ENCODE measurements at regions of chr18 and their contacts with region 1.

Region 1: DNA sequence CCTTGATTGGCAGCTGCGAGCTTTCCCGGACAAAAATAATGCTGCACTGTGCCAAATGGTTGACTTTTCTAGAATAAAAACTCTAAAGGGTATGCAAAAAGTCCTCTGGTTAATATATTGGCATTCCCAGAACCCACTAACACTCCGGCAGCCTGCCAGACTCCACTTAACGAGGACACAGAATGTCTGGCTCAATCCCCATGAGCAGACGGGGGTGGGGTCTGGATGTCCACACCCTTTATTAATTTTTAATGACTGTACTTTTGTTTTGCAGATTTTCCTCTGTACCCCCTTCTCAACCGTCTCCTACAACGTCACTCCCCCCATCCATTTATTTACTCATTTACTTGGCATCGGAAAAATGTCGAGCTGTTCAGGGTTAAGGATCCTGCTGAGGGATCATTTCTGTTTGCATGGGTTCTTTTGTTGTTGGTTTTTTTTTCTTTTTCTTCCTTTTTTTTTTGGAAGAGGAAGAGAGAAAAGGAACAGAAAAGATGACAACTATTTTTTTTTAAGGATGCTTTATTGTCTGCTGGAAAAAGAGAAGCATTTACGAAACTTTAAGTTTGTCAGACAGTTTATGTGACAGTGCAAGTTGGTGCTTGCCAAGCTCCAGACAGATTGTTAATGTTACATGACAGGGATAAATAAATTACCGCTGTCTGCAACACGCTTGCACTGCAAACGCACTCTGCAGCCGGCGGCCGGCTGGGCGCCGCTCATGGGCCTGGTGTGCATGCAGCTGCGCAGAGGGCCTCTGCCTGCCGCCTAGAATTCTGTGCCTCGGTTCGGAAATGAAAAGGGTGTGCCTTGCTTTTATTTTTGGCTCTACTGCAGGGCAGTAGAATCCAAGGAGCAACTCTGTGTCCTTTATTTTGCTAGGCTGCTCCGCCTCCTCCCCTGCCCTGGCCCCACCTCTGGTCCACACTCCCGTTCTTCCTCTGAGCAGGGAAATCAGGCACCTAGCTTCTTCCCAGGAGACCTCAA is 3.6 kb downstream of the LDLRAD4 start:
- DNase-seq: peak; percentile 73
- H3K4me3 ChIP-seq: no peak overlapping the region
- H3K27ac ChIP-seq: peak overlapping the region; percentile 75
- H3K4me1 ChIP-seq: peaks cover 41% of the 10 kb centered on the region
- H3K27me3 ChIP-seq: no peaks in the 10 kb centered on the region
- CTCF ChIP-seq: no peak

Region 2: DNA sequence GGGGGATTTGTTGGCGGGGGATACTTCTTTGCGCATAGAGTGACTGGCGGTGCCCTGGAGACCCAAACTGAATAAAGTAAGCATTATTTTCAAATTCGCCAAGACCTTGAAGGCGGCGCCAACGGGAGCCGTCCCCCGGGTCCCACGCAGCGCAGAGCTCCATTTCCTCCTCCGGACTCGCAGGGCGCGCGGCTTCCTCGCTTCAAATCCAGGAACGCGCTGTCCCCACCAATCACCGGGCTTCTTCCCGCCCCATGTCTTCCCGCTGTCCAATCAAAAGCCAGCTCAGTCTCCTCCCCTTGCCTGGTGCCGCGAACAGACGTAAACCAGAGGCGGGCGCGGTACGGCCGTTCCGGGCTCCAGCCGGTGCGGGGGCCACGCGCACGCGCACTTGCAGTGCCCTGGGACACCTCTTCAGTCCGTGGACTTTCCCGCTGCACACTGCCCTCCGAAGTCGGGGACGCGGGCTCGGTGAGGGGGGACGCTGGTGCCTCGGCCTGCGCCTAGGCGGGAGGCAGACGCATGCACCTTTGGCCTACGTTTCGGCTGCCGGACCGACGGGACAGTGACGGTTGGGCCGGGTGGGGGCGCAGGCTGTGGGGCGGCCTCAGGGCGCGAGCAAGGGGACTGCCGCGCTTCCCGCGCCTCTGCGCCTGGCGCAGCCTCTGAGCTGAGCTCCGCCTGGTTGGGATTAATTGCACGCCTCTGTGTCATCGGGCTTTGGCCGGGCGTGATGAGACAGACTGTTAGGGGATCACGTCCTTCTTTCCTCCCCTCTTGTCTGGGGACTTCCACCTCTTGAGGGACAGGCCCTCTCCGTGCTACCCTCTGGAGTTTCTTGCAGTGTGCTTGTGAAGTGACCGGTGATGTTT is 231.0 kb before region 1 on chr18 and contains the start of gene CEP192:
- intact Hi-C with region 1: no loop called
- DNase-seq: peak; percentile 98
- H3K4me3 ChIP-seq: peak within 1 kb of the TSS; percentile 97
- H3K27ac ChIP-seq: peak within 1 kb of the TSS; percentile 98
- H3K4me1 ChIP-seq: peaks cover 4% of the 10 kb centered on the region
- H3K27me3 ChIP-seq: no peaks in the 10 kb centered on the region
- CTCF ChIP-seq: no peak
- total RNA-seq, gene CEP192: 23.7 to 26.9 TPM

Region 3: GRCh38 chr18:13137670-13138419 is 84.3 kb before region 1 on chr18:
- intact Hi-C with region 1: no loop called
- DNase-seq: peak; percentile 90
- H3K4me3 ChIP-seq: peak overlapping the region; percentile 69
- H3K27ac ChIP-seq: peak overlapping the region; percentile 83
- H3K4me1 ChIP-seq: no peaks in the 10 kb centered on the region
- H3K27me3 ChIP-seq: no peaks in the 10 kb centered on the region
- CTCF ChIP-seq: no peak

Region 4: DNA sequence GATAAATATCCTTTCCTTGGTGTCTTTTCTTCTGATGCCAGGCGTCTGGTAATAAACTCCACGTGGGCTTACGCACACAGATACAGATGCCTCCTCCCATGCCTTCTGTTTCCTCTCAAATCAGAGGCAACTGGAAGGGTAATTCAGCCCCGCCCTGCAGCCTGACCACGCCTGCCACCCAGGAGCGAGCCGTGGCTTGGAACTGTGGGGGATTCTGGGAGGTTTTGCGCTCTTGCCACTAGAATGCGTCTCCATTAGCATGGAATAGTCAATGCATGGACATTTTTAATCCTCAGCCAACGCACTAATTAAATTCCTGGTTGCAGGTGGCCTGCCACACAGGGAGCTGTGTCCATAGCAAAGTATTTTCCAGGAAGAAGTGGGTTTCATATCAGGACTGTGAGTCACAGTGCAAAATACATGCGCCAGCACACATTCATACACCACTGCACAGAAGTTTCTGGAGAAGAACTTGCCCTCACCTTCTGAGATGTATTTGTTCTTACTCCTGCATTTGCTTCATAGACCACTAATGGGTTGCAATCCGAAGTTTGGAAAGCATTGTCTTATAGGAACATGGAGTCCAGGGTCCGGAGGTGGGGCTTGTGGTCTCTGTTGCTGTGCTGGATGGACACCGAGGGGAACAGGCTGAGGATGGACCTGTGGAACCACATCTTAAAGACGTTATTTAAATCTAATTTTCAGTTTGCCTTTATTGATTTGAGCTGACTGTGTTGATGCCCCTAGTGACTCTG is 147.8 kb after region 1 on chr18:
- intact Hi-C with region 1: loop called (anchors 5 kb)
- DNase-seq: peak; percentile 87
- H3K4me3 ChIP-seq: no peak overlapping the region
- H3K27ac ChIP-seq: peak overlapping the region; percentile 19
- H3K4me1 ChIP-seq: peaks cover 10% of the 10 kb centered on the region
- H3K27me3 ChIP-seq: no peaks in the 10 kb centered on the region
- CTCF ChIP-seq: no peak